Activated T-helper 1 cell treated with anti-CD3 and anti-CD28 coated beads, Interleukin-12 subunit alpha, Interleukin-12 subunit beta, Interleukin-2, Interleukin-4 antibody, amounts not matched to agents 30 ng/mL and 10 ng/mL and 1 ng/mL, durations not matched to agents 14 hours and 24 hours and 36 hours (primary cell): ENCODE measurements at regions of chr11 and their contacts with region 1.

Region 1: GRCh38 chr11:32893343-32894148 is 935 bp downstream of the QSER1 start:
- DNase-seq: peak; percentile 29
- H3K4me3 Mint-ChIP-seq: peak overlapping the region; percentile 94
- H3K27ac Mint-ChIP-seq: peak overlapping the region; percentile 92
- H3K4me1 Mint-ChIP-seq: peaks cover 35% of the 10 kb centered on the region
- H3K27me3 Mint-ChIP-seq: peaks cover 14% of the 10 kb centered on the region

Region 2: GRCh38 chr11:31509429-31510345 is 1383.9 kb before region 1 on chr11 and contains the starts of genes ELP4 and IMMP1L:
- intact Hi-C with region 1: loop called (anchors 5 kb)
- DNase-seq: peak; percentile 94
- H3K4me3 Mint-ChIP-seq: peak within 1 kb of the TSS; percentile 99
- H3K27ac Mint-ChIP-seq: peak within 1 kb of the TSS; percentile 94
- H3K4me1 Mint-ChIP-seq: peaks cover 47% of the 10 kb centered on the region
- H3K27me3 Mint-ChIP-seq: no peaks in the 10 kb centered on the region
- total RNA-seq, gene ELP4: 15.1 and 17.3 TPM in 2 replicates
- total RNA-seq, gene IMMP1L: 22.3 and 24.6 TPM in 2 replicates

Region 3: GRCh38 chr11:31690041-31690440 is 1203.5 kb before region 1 on chr11:
- intact Hi-C with region 1: no loop called
- DNase-seq: no peak
- H3K4me3 Mint-ChIP-seq: no peak overlapping the region
- H3K27ac Mint-ChIP-seq: no peak overlapping the region
- H3K4me1 Mint-ChIP-seq: no peaks in the 10 kb centered on the region
- H3K27me3 Mint-ChIP-seq: no peaks in the 10 kb centered on the region

Region 4: GRCh38 chr11:32829680-32830412 is 63.7 kb before region 1 on chr11 and contains the start of gene PRRG4:
- intact Hi-C with region 1: loop called (anchors 2 kb)
- DNase-seq: peak; percentile 46
- H3K4me3 Mint-ChIP-seq: peak within 1 kb of the TSS; percentile 90
- H3K27ac Mint-ChIP-seq: peak within 1 kb of the TSS; percentile 82
- H3K4me1 Mint-ChIP-seq: peaks cover 7% of the 10 kb centered on the region
- H3K27me3 Mint-ChIP-seq: peaks cover 23% of the 10 kb centered on the region
- total RNA-seq, gene PRRG4: 0.83 and 0.91 TPM in 2 replicates

Region 5: GRCh38 chr11:33015621-33016551 is 122.3 kb after region 1 on chr11 and contains the start of gene DEPDC7:
- intact Hi-C with region 1: loop called (anchors 1 kb)
- DNase-seq: peak; percentile 66
- H3K4me3 Mint-ChIP-seq: peak within 1 kb of the TSS; percentile 79
- H3K27ac Mint-ChIP-seq: no peak within 1 kb of the TSS
- H3K4me1 Mint-ChIP-seq: peaks cover 18% of the 10 kb centered on the region
- H3K27me3 Mint-ChIP-seq: peaks cover 41% of the 10 kb centered on the region
- total RNA-seq, gene DEPDC7: 0.26 and 0.61 TPM in 2 replicates

Region 6: GRCh38 chr11:33045551-33046255 is 152.2 kb after region 1 on chr11:
- intact Hi-C with region 1: no loop called
- DNase-seq: no peak
- H3K4me3 Mint-ChIP-seq: no peak overlapping the region
- H3K27ac Mint-ChIP-seq: no peak overlapping the region
- H3K4me1 Mint-ChIP-seq: peaks cover 14% of the 10 kb centered on the region
- H3K27me3 Mint-ChIP-seq: no peaks in the 10 kb centered on the region

Region 7: DNA sequence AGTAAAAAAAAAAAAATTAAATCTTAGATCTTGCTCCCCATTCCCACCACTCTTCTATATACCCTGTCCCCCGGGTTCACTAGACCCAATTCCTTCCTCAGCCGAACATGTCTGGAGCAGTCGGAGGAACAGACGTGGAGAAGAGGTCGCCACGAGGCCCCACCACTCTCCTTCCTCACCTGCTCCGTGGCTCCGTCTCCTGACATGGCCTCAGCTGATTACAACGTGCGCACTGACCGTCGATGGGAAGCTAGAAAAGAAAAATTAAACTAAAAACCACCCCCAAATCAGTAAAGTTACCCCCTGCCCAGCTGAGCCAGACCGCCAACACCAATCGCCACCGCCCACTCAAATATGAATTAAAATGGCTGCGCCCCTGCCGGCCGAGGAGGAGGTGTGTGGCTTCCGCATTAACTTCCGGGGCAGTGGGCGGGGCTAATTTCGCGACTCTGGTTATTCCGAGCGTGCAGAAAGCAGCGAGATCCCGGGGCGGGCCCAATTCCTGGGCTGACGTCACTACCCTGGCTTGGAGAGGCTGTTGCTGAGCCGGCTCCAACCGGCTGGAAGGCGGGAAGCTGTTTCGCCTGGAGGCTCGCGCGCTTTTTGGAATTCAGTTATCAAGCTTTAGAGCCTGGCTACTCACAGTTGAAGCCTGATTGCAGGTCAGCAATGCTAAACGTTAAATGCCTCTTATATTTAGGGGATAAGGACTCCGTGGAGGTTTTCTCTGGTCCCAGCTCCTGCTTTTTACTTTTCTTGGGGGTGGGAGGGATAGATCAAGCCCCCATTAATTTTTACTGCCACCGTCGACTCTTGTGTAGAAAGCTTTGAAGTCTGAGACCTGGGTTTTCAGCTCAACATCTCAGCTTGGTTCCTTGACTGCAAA is 267.8 kb after region 1 on chr11 and contains the start of gene CSTF3:
- intact Hi-C with region 1: loop called (anchors 1 kb)
- DNase-seq: peak; percentile 91
- H3K4me3 Mint-ChIP-seq: peak within 1 kb of the TSS; percentile 100
- H3K27ac Mint-ChIP-seq: peak within 1 kb of the TSS; percentile 100
- H3K4me1 Mint-ChIP-seq: peaks cover 40% of the 10 kb centered on the region
- H3K27me3 Mint-ChIP-seq: no peaks in the 10 kb centered on the region
- total RNA-seq, gene CSTF3: 34.9 and 36.5 TPM in 2 replicates

Region 8: DNA sequence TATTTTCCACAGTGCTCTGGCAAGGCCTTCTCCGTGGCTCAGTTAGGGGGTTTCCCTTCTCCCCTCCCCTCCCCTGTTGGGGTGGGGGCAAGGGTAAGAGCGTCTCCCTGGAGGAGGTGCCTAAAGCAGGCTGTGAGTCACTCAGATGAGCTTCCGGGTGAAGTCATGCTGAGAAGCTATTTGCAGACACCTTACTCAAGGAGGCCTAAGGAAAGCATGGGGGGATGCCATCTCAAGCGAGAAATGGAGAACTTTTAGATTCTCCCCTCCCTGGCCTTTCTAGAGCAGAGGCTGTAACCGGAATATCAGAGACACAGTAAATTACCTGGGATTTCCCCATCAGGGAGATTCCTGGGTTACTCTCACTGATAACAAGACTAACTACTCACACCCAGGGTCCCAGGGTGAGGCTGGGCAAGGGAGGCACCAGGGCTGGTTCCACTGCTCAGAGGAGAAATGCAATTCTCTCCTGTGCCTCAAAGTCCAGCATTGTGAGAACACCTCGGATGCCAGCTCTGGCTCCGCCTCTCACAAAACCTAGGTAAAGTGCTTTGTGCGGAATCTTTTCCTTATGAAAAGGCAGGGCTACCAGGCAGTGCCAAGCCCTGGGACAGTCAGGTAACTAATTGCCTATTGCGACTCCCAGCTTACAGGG is 1340.7 kb after region 1 on chr11:
- intact Hi-C with region 1: loop called (anchors 10 kb)
- DNase-seq: peak; percentile 80
- H3K4me3 Mint-ChIP-seq: peak overlapping the region; percentile 50
- H3K27ac Mint-ChIP-seq: peak overlapping the region; percentile 85
- H3K4me1 Mint-ChIP-seq: peaks cover 61% of the 10 kb centered on the region
- H3K27me3 Mint-ChIP-seq: peaks cover 12% of the 10 kb centered on the region